ENCODE measurements at regions of chr17 and their contacts with region 1.

Region 1: GRCh38 chr17:64420143-64420971 is 28.6 kb upstream of the MILR1 start:
- DNase-seq: peak; percentile 68

Region 2: DNA sequence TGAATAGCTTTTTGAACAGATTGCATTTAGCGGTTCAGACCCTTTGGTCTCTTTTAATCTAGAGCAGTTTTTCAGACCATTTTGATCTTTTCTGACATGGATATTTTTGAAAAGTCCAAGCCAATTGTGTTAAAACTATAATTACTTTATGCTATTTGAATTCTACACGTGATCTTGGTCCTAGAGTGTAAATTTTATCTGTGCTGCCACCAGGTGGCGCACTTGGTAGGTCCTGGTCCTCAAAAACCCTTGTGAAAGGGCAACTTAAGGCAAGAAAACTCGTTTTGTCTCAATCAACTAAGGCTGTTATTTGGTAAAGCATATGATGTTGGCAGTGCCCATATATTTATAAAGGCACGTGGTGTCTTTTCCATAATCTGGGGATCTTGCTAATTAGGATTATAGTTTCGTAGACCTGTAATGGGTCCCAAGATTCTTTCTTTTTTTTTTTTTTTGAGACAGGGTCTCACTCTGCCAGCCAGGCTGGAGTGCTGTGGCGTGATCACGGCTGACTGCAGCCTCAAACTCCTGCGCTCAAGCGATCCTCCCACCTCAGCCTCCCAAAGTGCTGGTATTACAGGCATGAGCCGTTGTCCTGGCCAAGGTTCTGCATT is 113.4 kb before region 1 on chr17:
- CTCF ChIA-PET with region 1: interaction called, 12 read pairs
- POLR2A ChIA-PET with region 1: no interaction called
- DNase-seq: peak; percentile 70

Region 3: GRCh38 chr17:64320613-64321553 is 99.5 kb before region 1 on chr17:
- CTCF ChIA-PET with region 1: interaction called, 26 read pairs
- POLR2A ChIA-PET with region 1: no interaction called
- DNase-seq: peak; percentile 89

Region 4: DNA sequence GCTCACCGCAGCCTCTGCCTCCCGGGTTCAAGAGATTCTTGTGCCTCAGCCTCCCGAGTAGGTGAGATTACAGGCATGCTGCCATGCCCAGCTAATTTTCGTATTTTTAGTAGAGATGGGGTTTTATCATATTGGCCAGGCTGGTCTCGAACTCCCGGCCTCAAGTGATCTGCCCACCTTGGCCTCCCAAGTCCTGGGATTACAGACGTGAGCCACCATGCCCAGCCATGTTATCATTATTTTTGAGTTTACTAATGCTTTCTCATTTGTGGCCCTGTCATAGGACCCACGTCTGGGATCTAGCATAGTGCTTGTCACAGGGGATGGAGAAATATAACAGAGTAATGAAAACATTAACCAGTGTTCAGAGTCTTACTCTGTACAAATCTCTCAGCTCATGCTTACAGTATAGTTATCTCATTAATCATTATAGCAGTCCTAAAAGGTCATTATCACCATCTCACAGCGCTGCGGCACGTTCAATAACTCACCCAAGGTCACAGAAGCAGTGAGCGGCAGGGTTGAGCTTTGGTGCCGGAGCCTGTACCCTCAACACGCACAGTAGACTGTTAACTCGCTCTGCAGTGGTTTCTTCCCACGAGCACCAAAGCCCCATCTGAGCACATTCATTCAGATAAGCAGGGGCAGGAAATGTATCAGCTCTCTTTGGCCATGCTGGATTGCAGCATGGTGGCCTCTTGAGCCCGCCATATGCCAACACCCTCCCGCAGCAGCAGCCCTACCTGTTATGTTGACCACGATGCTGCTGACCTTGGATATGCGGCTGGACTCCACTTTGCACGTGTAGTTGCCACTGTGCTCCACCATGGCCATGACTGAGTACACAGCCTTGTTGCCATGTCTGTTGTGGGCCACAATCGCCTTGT is 51.1 kb before region 1 on chr17:
- CTCF ChIA-PET with region 1: no interaction called
- POLR2A ChIA-PET with region 1: no interaction called
- DNase-seq: no peak

Region 5: DNA sequence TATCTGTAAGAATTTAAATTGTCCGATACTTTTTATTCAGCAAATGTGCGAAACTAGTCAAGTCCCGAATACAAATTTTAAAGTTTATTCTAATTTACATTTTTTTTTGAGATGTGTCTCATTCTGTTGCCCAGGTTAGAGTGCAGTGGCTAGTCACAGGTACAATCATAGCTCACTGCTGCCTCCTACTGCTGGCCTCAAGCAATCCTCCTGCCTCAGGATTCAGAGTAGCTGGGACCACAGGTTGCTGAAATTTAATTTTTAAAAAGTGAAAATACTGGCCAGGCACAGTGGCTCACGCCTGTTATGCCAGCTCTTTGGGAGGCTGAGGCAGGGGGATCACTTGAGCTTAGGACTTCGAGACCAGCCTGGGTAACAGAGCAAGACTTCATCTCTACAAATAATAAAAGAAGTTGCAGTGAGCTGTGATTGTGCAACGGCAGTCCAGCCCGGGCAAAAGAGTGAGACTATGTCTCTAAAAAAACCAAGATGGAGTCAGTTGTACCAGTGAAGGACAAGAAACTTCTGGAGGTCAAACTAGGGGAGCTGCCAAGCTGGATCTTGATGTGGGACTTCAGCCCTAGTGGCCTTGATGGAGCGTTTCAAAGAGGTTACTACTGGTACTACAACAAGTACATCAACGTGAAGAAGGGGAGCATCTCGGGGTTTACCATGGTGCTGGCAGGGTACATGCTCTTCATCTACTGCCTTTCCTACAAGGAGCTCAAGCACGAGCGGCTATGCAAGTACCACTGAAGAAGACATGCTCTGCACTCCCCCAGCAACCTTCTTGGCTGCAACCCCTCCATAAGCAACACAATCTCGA is 70.9 kb after region 1 on chr17:
- CTCF ChIA-PET with region 1: interaction called, 22 read pairs
- POLR2A ChIA-PET with region 1: interaction called, 15 read pairs
- DNase-seq: no peak

Region 6: DNA sequence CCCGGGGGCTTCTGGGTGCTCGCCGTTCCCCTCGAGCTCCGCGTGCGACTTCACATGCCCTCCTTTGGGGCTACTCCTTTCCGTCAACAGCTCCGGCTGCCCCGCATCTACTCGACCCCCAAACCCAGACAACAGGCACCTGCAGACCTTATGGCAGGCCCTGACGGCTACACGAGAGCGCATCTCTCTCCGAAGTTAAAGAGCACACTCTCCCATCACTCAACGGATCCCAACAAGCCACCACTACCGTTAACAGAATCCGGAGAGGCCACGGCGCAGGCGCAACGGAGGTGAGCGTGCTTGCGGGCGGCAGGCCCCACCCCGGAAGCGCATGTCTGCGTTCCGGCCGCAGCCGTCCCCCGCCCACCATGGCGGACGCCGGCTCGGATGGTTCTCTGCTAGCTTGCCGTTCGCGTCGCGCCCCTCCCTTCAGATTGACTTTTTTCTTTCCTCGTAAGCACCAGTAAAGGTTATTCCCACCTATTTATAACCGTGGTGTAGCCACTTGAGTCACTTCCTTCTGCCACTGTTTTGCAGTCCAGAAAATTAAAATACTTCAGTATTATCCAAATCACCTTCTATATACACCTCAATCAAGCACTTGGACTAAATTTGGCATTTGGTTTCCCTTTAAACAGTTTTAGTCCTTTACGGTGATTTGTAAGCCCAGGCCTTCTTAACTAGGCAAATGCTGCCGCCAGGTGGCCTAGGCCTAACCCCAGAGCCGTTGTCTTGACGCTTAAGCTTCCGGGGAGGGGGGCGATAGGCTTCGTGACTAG is 76.6 kb after region 1 on chr17 and contains the start of gene POLG2:
- CTCF ChIA-PET with region 1: interaction called, 22 read pairs
- POLR2A ChIA-PET with region 1: interaction called, 15 read pairs
- DNase-seq: peak; percentile 93

Region 7: GRCh38 chr17:64506576-64507477 is 86.5 kb after region 1 on chr17 and contains the start of gene CEP95:
- CTCF ChIA-PET with region 1: interaction called, 4 read pairs
- POLR2A ChIA-PET with region 1: interaction called, 26 read pairs
- DNase-seq: no peak

Measured in HEK293T (cell line).